Heart right ventricle (tissue), 16 donors: ENCODE measurements at regions of chr4 and their contacts with region 1.

Region 1: DNA sequence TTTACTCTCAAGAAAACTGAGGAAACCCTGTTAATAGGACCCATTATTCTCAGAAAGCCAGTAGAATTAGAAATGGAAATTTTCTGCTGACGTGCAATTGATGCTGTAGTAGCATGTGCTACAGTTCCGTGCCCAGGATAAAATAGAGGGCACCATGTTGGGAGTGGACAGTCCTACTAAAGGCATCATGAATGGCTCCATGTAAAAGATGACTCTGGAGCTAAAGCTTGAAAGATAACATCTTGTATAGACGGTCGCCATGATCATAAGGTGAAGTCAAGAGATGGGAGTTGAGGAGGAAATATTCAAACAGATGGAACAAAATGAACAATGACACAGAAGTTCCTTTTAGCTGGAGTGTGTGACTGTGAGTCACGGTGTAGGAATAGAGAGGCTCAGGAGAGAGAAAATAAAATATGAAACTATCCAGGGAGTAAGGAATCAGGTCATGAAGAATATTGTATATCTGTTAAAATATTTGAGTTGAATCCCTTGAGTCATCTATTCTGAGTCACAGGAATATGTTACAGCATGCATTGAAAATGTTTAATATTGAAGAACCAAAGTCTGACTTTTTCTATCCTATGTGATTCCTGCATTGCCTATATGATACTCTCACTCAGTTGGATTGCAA is 31.8 kb downstream of the ANXA10 start:
- DNase-seq: no peak
- ATAC-seq: no peak
- H3K4me3 ChIP-seq: no peak overlapping the region
- H3K27ac ChIP-seq: no peak overlapping the region
- H3K4me1 ChIP-seq: no peaks in the 10 kb centered on the region
- H3K27me3 ChIP-seq: no peaks in the 10 kb centered on the region
- CTCF ChIP-seq: no peak

Region 2: DNA sequence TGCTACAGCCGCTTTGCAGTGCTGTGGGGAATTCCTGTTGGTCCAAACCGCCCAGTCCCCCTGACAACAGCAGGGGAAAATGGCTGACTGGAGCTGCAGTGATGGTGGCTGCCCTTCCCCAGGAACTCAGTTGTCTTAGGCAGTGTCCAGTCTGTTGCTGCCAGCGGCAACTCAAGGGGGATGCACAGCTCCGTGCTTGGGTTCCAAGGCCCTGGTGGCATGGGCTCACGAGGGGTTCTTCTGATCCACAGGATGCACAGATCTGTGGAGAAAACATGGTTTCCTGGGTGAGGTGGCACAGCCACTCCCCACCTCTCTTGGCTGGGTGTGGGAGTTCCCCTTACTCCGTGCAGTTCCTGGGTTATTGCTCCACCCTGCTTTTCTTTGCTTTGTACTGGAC is 1989.8 kb before region 1 on chr4:
- intact Hi-C with region 1: loop called in 1 of 10 experiments (anchors 5 kb)
- DNase-seq: no peak
- ATAC-seq: no peak
- H3K4me3 ChIP-seq: no peak overlapping the region
- H3K27ac ChIP-seq: no peak overlapping the region
- H3K4me1 ChIP-seq: no peaks in the 10 kb centered on the region
- H3K27me3 ChIP-seq: peaks cover 0 to 1% (median 0%) of the 10 kb centered on the region in 7 donors
- CTCF ChIP-seq: no peak

Region 3: DNA sequence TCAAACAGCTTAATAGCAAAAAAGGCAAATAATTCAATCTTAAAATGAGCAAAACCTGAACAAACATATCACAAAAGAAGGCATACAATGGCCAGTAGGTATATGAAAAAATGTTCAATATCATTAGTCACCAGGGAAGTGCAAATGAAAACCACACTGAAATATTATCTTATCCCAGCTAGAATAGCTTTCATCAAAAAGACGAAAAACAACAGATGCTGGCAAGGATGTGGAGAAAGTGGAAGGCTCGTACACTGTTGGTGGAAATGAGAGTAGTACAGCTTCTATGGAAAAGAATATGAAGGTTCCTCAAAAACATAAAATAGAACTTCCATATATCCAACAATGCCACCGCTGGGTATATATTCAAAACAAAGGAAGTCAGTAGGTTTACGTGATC is 61.1 kb before region 1 on chr4:
- intact Hi-C with region 1: no loop called
- DNase-seq: no peak
- ATAC-seq: no peak
- H3K4me3 ChIP-seq: no peak overlapping the region
- H3K27ac ChIP-seq: no peak overlapping the region
- H3K4me1 ChIP-seq: no peaks in the 10 kb centered on the region
- H3K27me3 ChIP-seq: peaks cover 0 to 3% (median 0%) of the 10 kb centered on the region in 7 donors
- CTCF ChIP-seq: no peak

Region 4: DNA sequence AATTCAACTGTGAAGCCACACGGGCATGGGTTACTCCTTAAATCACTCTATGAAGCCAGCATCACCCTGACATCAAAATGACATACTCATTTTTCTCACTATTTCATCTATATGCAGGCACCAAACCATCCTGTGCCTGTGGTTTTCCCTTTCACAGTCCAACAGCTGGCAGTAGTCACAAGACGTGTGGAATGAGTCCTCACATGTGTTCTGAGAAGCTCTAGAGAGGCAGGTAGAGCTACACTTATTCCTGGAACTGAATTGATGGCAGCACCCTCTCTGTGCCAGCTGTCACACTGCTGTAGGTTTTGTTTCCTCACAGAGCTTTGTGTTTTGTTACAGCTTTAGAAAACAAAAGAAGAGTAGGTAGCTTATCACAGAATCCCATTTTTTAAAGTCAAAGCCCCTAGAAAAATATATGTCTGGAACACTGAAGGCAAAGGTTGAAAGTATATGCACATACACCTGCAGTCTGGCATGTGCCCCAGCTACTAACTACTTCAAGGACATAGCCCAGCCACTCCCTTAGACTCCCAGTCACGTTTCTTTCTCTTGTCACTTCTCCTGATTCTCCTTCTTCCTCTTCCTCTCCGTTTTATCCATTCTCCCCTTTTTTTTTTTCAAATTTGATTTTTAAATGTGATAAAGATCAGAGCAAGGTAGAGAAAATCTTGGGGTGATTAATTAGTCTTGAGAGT is 75.3 kb after region 1 on chr4:
- intact Hi-C with region 1: loop called in 1 of 10 experiments (anchors 2 kb)
- DNase-seq: no peak
- ATAC-seq: no peak
- H3K4me3 ChIP-seq: no peak overlapping the region
- H3K27ac ChIP-seq: no peak overlapping the region
- H3K4me1 ChIP-seq: no peaks in the 10 kb centered on the region
- H3K27me3 ChIP-seq: no peaks in the 10 kb centered on the region
- CTCF ChIP-seq: no peak